Panc1 (cell line): ENCODE measurements at regions of chr16 and their contacts with region 1.

Region 1: GRCh38 chr16:69396187-69397061 is 10.6 kb upstream of the TERF2 start:
- DNase-seq: no peak
- ATAC-seq: peak; percentile 82
- H3K4me3 ChIP-seq: peak overlapping the region; percentile 24 to 44; a peak in 3 of 4 replicates
- H3K27ac ChIP-seq: peak overlapping the region; percentile 97
- H3K4me1 ChIP-seq: peaks cover 49% of the 10 kb centered on the region
- H3K27me3 ChIP-seq: no peaks in the 10 kb centered on the region
- CTCF ChIP-seq: peak; percentile 68

Region 2: DNA sequence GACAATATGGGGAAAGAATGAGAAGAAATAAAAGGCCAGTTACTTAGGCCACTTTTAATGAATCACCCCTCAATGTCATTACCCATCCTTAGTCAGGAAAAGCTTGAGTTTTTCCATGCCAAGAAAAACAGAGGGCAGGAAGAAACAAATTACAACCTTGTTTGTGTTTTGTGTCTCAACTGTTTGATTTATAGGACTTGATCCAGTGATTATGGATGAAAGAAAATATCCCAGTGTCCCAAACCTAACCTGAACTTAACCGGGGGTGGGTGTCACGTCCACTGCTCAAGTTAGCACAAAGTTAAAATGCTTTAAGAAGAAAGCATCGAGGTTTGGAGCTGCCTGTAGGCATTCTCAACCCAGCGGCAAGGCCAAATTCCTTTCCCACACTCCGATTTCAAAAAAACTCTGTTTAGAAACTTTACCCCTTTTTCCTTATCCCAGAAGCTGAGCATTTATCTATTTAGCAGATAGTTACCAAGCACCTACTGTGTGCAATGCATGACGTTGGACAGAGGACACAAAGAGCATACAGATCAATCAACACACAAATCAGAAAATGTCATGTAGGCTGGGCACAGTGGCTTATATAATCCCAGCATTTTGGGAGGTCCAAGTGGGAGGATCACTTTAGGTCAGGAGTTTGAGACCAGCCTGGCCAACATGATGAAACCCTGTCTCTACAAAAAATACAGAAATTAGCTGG is 14.0 kb after region 1 on chr16:
- CTCF ChIA-PET with region 1: interaction called, 6 read pairs
- POLR2A ChIA-PET with region 1: interaction called, 13 read pairs
- in situ Hi-C with region 1: no loop called
- intact Hi-C with region 1: no loop called
- DNase-seq: no peak
- ATAC-seq: peak; percentile 65
- H3K4me3 ChIP-seq: no peak overlapping the region
- H3K27ac ChIP-seq: peak overlapping the region; percentile 94
- H3K4me1 ChIP-seq: peaks cover 45% of the 10 kb centered on the region
- H3K27me3 ChIP-seq: no peaks in the 10 kb centered on the region
- CTCF ChIP-seq: no peak

Region 3: GRCh38 chr16:69417520-69418199 is 21.2 kb after region 1 on chr16:
- CTCF ChIA-PET with region 1: no interaction called
- POLR2A ChIA-PET with region 1: interaction called, 13 read pairs
- in situ Hi-C with region 1: no loop called
- intact Hi-C with region 1: no loop called
- DNase-seq: peak; percentile 85
- ATAC-seq: peak; percentile 94
- H3K4me3 ChIP-seq: peak overlapping the region; percentile 21 to 38; a peak in 3 of 4 replicates
- H3K27ac ChIP-seq: peak overlapping the region; percentile 96
- H3K4me1 ChIP-seq: peaks cover 50% of the 10 kb centered on the region
- H3K27me3 ChIP-seq: no peaks in the 10 kb centered on the region
- CTCF ChIP-seq: no peak

Region 4: GRCh38 chr16:69443927-69444631 is 47.7 kb after region 1 on chr16:
- CTCF ChIA-PET with region 1: no interaction called
- POLR2A ChIA-PET with region 1: no interaction called
- in situ Hi-C with region 1: no loop called
- intact Hi-C with region 1: loop called (anchors 5 kb)
- DNase-seq: peak; percentile 15
- ATAC-seq: peak; percentile 84
- H3K4me3 ChIP-seq: peak overlapping the region; percentile 6 to 9; a peak in 2 of 4 replicates
- H3K27ac ChIP-seq: peak overlapping the region; percentile 87
- H3K4me1 ChIP-seq: peaks cover 45% of the 10 kb centered on the region
- H3K27me3 ChIP-seq: no peaks in the 10 kb centered on the region
- CTCF ChIP-seq: no peak

Region 5: GRCh38 chr16:69469807-69470561 is 73.6 kb after region 1 on chr16:
- CTCF ChIA-PET with region 1: no interaction called
- POLR2A ChIA-PET with region 1: no interaction called
- in situ Hi-C with region 1: no loop called
- intact Hi-C with region 1: loop called (anchors 10 kb)
- DNase-seq: no peak
- ATAC-seq: 0 out of 2 replicates have a peak, but pooled peaks have one; percentile 32
- H3K4me3 ChIP-seq: no peak overlapping the region
- H3K27ac ChIP-seq: peak overlapping the region; percentile 48
- H3K4me1 ChIP-seq: peaks cover 33% of the 10 kb centered on the region
- H3K27me3 ChIP-seq: no peaks in the 10 kb centered on the region
- CTCF ChIP-seq: no peak